HEK293 (cell line): ENCODE measurements at regions of chr11 and their contacts with region 1.

Region 1: DNA sequence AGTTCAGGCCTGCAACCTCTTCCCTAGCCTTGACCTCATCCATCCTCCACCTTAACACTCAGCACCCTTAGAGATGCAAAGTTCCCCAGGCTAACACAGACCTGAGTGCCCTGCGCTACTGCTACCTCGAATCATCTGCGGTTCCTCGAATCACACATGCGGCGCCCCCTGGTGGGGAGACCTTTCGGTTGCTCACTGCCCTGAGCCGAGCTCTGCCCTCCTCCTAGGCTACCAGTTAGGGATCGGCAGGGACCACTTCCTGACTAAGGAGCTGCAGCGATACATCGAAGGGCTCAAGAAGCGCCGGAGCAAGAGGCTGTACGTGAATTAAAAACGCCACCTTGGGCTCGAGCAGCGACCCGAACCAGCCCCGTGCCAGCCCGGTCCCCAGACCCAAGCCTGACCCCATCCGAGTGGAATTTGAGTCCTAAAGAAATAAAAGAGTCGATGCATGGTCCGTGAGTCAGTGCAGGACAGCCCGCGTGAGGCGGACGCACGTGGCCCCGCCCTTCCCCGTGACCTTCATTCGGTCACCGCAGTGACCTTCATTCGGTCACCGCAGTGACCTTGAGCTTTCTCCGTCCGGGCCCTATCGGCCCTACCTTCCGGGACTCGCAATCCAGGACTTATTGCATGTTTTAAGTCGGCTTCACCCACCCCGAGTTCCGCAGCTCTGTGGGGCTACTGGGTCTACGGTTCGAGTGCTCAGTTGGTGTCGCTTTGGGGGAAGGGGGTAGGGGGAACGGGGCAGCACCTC is 830 bp upstream of the ESRRA start:
- H3K4me3 ChIP-seq: peak overlapping the region; percentile 46
- H3K27ac ChIP-seq: peak overlapping the region; percentile 70
- H3K4me1 ChIP-seq: no peaks in the 10 kb centered on the region
- CTCF ChIP-seq: peak; percentile 87

Region 2: GRCh38 chr11:64110465-64111375 is 193.8 kb before region 1 on chr11:
- CTCF ChIA-PET with region 1: no interaction called
- POLR2A ChIA-PET with region 1: no interaction called
- H3K4me3 ChIP-seq: no peak overlapping the region
- H3K27ac ChIP-seq: no peak overlapping the region
- H3K4me1 ChIP-seq: no peaks in the 10 kb centered on the region
- CTCF ChIP-seq: no peak

Region 3: DNA sequence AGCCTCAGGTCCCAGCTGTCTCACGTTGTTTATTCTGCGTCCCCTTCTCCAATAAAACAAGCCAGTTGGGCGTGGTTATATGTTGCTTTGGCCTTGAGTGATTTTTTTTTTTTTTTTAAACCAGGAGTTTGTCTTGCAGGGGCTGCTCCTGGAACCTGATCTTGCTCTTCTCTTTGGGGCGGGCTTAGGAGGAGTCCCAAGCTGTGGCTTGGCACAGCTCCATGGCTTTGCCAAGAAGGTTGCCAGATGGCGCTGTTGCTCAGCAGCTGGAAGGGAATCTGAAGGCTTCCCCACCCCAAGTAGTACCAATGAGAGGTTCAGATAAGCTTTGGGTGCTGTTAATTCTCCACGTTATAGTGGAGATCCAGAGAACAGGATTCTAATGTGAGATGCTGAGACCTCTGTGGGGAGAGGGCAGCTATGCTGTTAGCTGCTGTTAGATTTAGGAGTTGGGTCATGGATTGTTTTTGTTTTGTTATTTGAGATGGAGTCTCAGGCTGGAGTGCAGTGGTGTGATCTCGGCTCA is 100.0 kb before region 1 on chr11:
- CTCF ChIA-PET with region 1: interaction called, 78 read pairs
- POLR2A ChIA-PET with region 1: interaction called, 22 read pairs
- H3K4me3 ChIP-seq: no peak overlapping the region
- H3K27ac ChIP-seq: peak overlapping the region; percentile 55
- H3K4me1 ChIP-seq: 0 out of 2 replicates have a peak, but pooled peaks cover 8% of the 10 kb centered on the region
- CTCF ChIP-seq: peak; percentile 80

Region 4: GRCh38 chr11:64245797-64246620 is 58.5 kb before region 1 on chr11:
- CTCF ChIA-PET with region 1: interaction called, 48 read pairs
- POLR2A ChIA-PET with region 1: interaction called, 8 read pairs
- H3K4me3 ChIP-seq: peak overlapping the region; percentile 68
- H3K27ac ChIP-seq: peak overlapping the region; percentile 66; the same call in 1 of the 2 replicates
- H3K4me1 ChIP-seq: peaks cover 4% of the 10 kb centered on the region
- CTCF ChIP-seq: no peak

Region 5: GRCh38 chr11:64269380-64270234 is 34.9 kb before region 1 on chr11:
- CTCF ChIA-PET with region 1: interaction called, 81 read pairs
- POLR2A ChIA-PET with region 1: interaction called, 31 read pairs
- H3K4me3 ChIP-seq: peak overlapping the region; percentile 70
- H3K27ac ChIP-seq: peak overlapping the region; percentile 83
- H3K4me1 ChIP-seq: 0 out of 2 replicates have a peak, but pooled peaks cover 2% of the 10 kb centered on the region
- CTCF ChIP-seq: 0 out of 2 replicates have a peak, but pooled peaks have one; percentile 25

Region 6: DNA sequence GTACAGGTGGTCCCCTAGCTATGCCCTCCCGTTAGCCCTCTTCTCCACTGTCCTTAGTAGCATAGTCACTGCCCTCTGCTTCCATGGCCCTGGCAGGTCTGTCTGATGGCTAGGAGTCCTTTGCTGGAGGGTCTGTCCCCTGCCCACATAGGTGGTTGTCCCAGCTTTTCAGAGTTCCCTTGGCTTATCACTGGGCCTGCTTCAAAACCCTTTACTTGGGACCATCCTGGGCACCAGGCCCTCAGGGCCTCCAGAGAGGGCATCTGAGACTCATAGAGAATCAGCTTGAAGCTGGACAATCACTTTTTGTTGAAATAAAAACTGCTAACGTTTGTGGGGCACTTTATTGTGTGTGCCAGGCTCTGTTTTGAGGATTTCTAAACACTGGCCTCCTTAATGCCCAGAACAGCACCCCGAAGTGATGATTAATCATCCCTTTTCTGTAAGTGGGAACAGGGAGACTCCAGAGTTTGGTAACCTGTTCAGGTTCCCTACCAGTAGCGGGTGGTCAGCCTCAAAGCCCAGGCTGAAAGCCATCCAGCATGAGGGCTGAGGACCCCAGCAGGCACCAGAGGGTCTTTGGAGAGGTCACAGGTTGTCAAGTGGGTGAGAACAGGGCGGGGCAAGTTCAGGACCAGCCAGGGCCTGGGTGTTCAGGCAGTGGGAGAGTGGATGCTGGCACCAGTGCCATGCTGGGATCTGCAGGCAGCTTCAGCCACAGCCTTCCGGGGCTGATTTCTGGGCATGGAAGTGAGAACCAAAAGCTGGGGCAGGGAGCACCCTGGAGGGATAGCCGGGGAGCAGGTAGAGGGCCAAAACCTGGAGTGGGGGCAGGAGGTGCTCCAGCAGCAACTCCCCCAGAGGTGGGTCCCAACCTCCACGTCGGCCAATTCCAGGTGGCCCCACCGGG is 13.9 kb before region 1 on chr11:
- CTCF ChIA-PET with region 1: interaction called, 13 read pairs
- POLR2A ChIA-PET with region 1: interaction called, 9 read pairs
- H3K4me3 ChIP-seq: no peak overlapping the region
- H3K27ac ChIP-seq: no peak overlapping the region
- H3K4me1 ChIP-seq: no peaks in the 10 kb centered on the region
- CTCF ChIP-seq: no peak

Region 7: DNA sequence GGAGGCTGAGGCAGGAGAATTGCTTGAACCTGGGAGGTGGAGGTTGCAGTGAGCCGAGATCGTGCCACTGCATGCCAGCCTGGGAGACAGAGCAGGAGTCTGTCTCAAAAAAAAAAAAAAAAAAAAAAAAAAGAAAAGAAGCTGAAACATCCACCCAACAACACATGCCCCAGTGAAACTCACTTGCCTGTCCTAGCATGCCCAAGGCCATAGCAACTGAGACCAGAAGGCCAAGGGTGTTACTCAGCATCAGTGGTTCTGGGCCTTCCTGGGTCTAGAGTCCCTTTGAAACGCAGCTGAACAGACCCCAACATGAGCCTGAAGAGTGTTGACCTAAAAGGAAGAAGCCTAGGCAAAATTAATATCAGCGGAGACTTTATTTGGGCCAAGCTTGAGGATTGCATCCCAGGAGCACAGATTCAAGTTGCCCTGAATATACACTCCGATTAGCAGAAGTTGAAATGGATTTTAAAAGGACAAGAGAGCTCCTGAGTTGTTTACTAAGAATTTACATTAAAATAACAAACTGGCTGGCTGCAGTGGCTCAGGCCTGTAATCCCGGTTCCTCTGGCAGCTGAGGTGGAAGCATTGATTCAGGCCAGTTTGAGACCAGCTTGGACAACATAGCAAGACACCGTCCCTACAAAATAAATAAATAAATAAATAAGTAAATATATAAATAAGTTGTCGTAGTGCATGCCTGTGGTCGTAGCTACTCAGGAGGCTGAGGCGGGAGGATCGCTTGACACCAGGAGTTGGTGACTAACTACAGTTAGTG is 20.4 kb after region 1 on chr11:
- CTCF ChIA-PET with region 1: interaction called, 10 read pairs
- POLR2A ChIA-PET with region 1: interaction called, 6 read pairs
- H3K4me3 ChIP-seq: no peak overlapping the region
- H3K27ac ChIP-seq: no peak overlapping the region
- H3K4me1 ChIP-seq: no peaks in the 10 kb centered on the region
- CTCF ChIP-seq: no peak

Region 8: DNA sequence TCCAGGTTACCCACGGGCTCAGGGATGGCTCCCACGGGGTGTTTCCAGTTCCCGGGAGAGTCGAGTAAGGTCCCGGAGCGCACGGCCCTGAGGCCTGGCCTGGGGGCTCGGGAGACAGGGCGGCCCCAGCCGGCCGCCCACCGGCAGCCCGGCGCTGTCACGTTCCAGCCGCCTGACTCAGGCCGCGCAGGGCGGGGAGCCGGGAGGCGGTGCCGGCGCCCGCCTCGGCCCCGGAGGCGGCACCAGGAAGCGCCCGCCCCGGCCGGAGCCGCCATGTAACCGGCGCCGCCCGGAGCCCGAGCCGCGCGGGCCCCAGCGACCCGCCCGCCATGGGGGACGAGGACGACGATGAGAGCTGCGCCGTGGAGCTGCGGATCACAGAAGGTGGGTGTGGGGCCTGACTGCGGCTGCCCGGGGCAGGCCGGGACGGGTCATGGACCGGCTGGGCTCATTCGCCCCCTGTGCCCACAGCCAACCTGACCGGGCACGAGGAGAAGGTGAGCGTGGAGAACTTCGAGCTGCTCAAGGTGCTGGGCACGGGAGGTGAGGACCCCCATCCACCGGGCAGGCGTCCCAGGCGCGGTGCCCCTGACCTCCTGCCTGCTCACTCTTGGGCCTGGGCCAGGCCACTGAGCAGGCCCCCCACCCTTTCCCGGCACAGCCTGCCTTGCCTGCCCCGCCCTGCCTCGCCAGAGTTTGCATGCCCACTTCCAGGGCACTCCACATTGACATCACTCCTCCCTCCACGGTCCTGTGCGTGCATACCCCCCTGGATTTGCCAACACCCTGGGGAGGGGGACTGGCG is 54.6 kb after region 1 on chr11 and contains the start of gene RPS6KA4:
- CTCF ChIA-PET with region 1: interaction called, 63 read pairs
- POLR2A ChIA-PET with region 1: interaction called, 5 read pairs
- H3K4me3 ChIP-seq: peak within 1 kb of the TSS; percentile 83
- H3K27ac ChIP-seq: peak within 1 kb of the TSS; percentile 75; the same call in 1 of the 2 replicates
- H3K4me1 ChIP-seq: no peaks in the 10 kb centered on the region; the same call in 1 of the 2 replicates
- CTCF ChIP-seq: no peak

Region 9: GRCh38 chr11:64638018-64638665 is 333.6 kb after region 1 on chr11:
- CTCF ChIA-PET with region 1: no interaction called
- POLR2A ChIA-PET with region 1: no interaction called
- H3K4me3 ChIP-seq: no peak overlapping the region
- H3K27ac ChIP-seq: no peak overlapping the region
- H3K4me1 ChIP-seq: no peaks in the 10 kb centered on the region
- CTCF ChIP-seq: no peak